ENCODE measurements at regions of chr3 and their contacts with region 1.

Region 1: DNA sequence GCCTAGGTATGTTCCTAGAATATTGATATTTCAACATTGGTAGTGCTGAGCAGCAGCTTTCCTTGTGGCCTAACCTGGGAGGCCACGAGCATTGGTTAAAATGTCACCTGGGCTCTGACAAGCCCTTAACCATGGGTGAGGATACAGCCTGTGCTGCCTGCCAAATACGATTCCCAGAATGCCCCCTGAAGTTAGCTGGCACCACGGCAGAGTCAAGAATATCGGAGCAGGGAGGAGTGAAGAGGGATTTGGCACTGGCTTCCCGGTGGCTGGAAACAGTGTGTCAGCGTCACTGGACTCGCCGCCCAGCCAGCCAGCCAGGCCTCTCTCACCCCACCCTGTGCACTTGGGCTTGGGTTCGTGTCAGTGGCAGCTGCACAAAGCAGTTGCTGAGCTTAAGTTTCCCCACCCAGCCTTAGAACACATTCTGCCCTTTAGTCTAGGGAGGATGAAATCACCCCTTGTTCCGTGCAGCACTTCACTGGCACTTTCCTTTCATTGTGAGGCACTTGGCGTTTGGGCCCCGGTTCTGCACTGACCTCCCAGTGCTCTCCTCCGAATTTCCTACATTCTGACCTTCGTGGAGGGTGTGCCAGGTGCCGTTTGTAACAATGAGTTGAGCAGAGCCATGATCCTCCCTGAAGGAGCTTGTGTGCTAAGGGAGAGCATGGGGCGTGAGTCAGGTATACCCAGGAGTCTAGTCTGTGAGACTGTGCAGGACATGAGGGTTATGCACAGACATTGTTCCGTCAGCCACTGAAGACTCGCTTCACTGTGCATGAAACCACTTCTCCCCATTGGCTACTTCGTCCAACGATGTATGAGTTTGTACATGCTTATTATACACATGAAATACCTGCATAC is 152.8 kb upstream of the BHLHE40 start:
- DNase-seq: no peak
- H3K4me3 ChIP-seq: peak overlapping the region; percentile 4 to 39
- H3K4me3 Mint-ChIP-seq: peak overlapping the region; percentile 74 to 94 (median 88)
- H3K27ac ChIP-seq: peak overlapping the region; percentile 33
- H3K27ac Mint-ChIP-seq: peak overlapping the region; percentile 88 to 98 (median 96)
- H3K4me1 ChIP-seq: peaks cover 99% of the 10 kb centered on the region
- H3K4me1 Mint-ChIP-seq: peaks cover 77 to 97% (median 93%) of the 10 kb centered on the region in 4 donors
- H3K27me3 ChIP-seq: no peaks in the 10 kb centered on the region
- H3K27me3 Mint-ChIP-seq: peaks cover 0 to 3% of the 10 kb centered on the region in 2 donors

Region 2: DNA sequence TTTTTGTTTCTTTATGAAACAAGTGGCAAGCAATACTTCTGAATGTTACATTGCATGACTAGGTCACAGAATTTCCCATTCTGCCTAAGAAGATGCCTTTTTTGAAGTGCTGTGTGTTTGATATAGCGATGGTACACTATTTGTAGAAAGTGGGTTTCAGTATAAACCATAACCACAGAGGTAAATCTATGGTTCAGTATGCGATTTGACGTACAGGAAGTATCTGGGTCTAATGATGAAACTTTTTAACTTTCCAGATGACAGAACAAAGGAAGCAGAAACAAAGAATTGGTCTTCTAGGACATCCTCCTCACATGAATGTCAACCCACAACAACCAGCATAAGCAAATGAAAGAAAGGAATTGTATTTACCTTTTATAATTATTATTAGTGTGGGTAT is 19.4 kb after region 1 on chr3:
- CTCF ChIA-PET with region 1: interaction called, 11 read pairs
- POLR2A ChIA-PET with region 1: interaction called, 18 read pairs
- intact Hi-C with region 1: loop called (anchors 2 kb)
- DNase-seq: peak in 4 of 5 donors; percentile 73 to 84 (median 76)
- H3K4me3 ChIP-seq: peak overlapping the region in 1 of 2 donors; percentile 27
- H3K4me3 Mint-ChIP-seq: peak overlapping the region in 7 of 8 donors; percentile 5 to 62 (median 35)
- H3K27ac ChIP-seq: peak overlapping the region; percentile 67
- H3K27ac Mint-ChIP-seq: peak overlapping the region; percentile 50 to 98 (median 94)
- H3K4me1 ChIP-seq: peaks cover 96% of the 10 kb centered on the region
- H3K4me1 Mint-ChIP-seq: peaks cover 70 to 93% (median 83%) of the 10 kb centered on the region in 4 donors
- H3K27me3 ChIP-seq: no peaks in the 10 kb centered on the region
- H3K27me3 Mint-ChIP-seq: no peaks in the 10 kb centered on the region

Region 3: GRCh38 chr3:4906107-4906621 is 79.7 kb after region 1 on chr3:
- CTCF ChIA-PET with region 1: interaction called, 3 read pairs
- POLR2A ChIA-PET with region 1: interaction called, 8 read pairs
- intact Hi-C with region 1: loop called (anchors 2 kb)
- DNase-seq: peak in 1 of 5 donors; percentile 46
- H3K4me3 ChIP-seq: no peak overlapping the region
- H3K4me3 Mint-ChIP-seq: peak overlapping the region in 3 of 8 donors; percentile 10 to 72 (median 36)
- H3K27ac ChIP-seq: peak overlapping the region; percentile 22
- H3K27ac Mint-ChIP-seq: peak overlapping the region; percentile 19 to 92 (median 76)
- H3K4me1 ChIP-seq: peaks cover 57% of the 10 kb centered on the region
- H3K4me1 Mint-ChIP-seq: peaks cover 39 to 73% (median 54%) of the 10 kb centered on the region in 4 donors
- H3K27me3 ChIP-seq: no peaks in the 10 kb centered on the region
- H3K27me3 Mint-ChIP-seq: no peaks in the 10 kb centered on the region

Region 4: DNA sequence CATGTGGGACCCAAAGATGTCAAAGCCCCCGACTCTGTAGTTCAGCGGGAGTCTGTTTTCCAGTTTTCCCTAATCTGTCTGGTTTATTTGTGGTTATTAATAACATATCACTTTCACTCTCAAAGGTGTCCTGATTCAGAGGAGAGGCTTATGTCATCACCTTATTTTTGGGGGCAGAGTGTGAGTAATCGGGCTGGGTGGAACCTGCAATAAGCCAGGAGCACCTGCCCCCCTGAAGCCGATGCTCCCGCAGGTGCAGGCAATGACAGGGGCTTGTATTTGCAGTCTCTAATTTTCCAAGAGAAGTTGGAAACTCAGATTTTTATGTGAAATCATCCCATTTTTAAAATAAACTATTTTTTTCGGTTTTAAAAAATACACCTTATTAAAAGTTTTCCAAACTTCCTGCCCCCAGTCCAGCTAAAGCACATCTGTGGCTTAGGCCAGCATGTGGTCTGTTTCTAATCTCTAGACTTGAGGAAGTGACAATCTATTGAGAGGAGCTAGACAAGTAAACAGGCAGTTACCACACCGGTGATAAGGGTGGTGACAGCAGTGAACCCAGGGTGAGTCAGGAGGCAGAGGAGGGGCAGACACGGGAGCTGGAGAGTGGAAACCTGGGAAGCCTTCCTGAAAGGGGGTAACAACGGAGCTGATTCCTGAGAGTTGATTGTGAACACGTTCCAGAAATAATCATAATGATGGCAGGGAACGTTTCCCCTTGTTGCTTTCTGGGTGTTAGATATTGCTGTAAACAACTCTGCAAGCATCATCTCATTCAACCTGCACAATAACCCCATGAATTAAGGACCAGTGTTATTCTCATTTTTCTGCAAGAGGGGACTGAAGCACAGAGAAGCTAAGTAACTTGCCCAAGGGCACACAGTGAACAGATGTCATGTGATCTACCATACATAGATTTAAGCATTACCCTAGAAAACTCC is 190.0 kb after region 1 on chr3:
- CTCF ChIA-PET with region 1: interaction called, 10 read pairs
- POLR2A ChIA-PET with region 1: interaction called, 11 read pairs
- intact Hi-C with region 1: loop called (anchors 2 kb)
- DNase-seq: peak; percentile 32 to 78 (median 48)
- H3K4me3 ChIP-seq: no peak overlapping the region
- H3K4me3 Mint-ChIP-seq: peak overlapping the region; percentile 1 to 76 (median 61)
- H3K27ac ChIP-seq: no peak overlapping the region
- H3K27ac Mint-ChIP-seq: peak overlapping the region; percentile 82 to 97 (median 91)
- H3K4me1 ChIP-seq: peaks cover 71% of the 10 kb centered on the region
- H3K4me1 Mint-ChIP-seq: peaks cover 51 to 82% (median 67%) of the 10 kb centered on the region in 4 donors
- H3K27me3 ChIP-seq: no peaks in the 10 kb centered on the region
- H3K27me3 Mint-ChIP-seq: no peaks in the 10 kb centered on the region

Region 5: DNA sequence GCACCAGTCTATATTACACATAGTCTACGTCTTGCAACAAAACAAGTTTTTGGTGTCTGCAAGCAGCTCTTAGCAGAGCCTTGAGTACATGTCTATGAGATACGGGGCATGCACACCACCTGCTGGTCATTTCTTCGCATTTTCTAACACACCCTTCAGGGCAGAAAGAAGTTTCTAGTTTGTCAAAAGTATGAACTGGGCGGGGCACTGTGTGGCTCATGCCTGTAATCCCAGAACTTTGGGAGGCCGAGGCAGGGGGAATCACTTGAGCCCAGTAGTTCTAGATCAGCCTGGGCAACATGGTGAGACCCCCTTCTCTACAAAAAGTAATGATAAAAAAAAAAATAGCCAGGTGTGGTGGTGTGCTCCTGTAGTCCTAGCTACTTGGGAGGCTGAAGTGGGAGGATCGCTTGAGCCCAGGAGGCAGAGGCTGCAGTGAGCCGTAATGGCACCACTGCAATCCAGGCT is 231.4 kb after region 1 on chr3:
- CTCF ChIA-PET with region 1: interaction called, 5 read pairs
- POLR2A ChIA-PET with region 1: interaction called, 4 read pairs
- intact Hi-C with region 1: loop called (anchors 1 kb)
- DNase-seq: peak; percentile 66 to 82 (median 70)
- H3K4me3 ChIP-seq: no peak overlapping the region
- H3K4me3 Mint-ChIP-seq: no peak overlapping the region
- H3K27ac ChIP-seq: no peak overlapping the region
- H3K27ac Mint-ChIP-seq: no peak overlapping the region
- H3K4me1 ChIP-seq: peaks cover 3% of the 10 kb centered on the region
- H3K4me1 Mint-ChIP-seq: peaks cover 0 to 4% (median 1%) of the 10 kb centered on the region in 4 donors
- H3K27me3 ChIP-seq: no peaks in the 10 kb centered on the region
- H3K27me3 Mint-ChIP-seq: peaks cover 1% of the 10 kb centered on the region in 2 donors

Measured in CD4-positive, alpha-beta memory T cell (primary cell).